ENCODE measurements at regions of chr19 and their contacts with region 1.

Region 1: GRCh38 chr19:38964738-38965137 is 10.8 kb downstream of the FBXO17 start:
- DNase-seq: no peak
- H3K4me3 Mint-ChIP-seq: no peak overlapping the region
- H3K27ac Mint-ChIP-seq: no peak overlapping the region
- H3K4me1 Mint-ChIP-seq: peaks cover 11% of the 10 kb centered on the region
- H3K27me3 Mint-ChIP-seq: no peaks in the 10 kb centered on the region
- CTCF ChIP-seq: no peak

Region 2: DNA sequence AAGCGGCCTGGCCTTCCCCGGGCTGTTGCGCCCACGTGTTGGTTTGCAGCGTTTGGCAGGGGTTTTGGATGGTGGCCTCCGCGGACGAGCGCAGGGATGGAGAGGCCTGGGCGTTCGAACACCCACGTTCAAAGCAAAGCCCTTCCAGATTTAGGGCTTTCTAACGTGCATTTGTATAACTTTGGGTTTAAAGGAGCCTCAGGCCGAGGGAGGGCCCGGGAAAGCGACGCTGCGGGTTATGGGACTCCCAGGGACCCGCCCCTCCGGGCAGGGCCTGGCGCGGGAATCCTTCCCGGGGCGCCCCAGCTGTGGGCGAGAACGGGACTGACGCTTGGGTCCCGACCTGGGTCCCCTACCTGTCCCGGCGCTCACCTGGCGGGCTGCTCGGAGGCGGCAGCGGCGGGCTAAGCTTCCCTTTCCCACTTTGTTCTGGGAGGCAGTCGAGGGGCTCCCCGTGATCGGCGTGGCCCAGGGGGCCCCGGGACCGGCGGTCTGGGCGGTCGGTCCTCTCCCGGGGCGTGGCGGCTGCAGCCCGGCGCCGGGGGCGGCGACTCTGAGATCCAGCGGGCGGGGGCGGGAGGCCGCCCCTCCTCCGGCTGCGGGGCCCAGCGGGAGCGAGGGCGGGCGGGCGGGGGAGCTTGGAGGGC is 10.6 kb after region 1 on chr19 and contains the start of gene FBXO17:
- CTCF ChIA-PET with region 1: interaction called, 10 read pairs
- intact Hi-C with region 1: no loop called
- DNase-seq: peak; percentile 71
- H3K4me3 Mint-ChIP-seq: peak within 1 kb of the TSS; percentile 76
- H3K27ac Mint-ChIP-seq: peak within 1 kb of the TSS; percentile 88
- H3K4me1 Mint-ChIP-seq: peaks cover 41% of the 10 kb centered on the region
- H3K27me3 Mint-ChIP-seq: no peaks in the 10 kb centered on the region
- CTCF ChIP-seq: no peak
- total RNA-seq, gene FBXO17: 20.1 and 24.2 TPM in 2 replicates

Region 3: DNA sequence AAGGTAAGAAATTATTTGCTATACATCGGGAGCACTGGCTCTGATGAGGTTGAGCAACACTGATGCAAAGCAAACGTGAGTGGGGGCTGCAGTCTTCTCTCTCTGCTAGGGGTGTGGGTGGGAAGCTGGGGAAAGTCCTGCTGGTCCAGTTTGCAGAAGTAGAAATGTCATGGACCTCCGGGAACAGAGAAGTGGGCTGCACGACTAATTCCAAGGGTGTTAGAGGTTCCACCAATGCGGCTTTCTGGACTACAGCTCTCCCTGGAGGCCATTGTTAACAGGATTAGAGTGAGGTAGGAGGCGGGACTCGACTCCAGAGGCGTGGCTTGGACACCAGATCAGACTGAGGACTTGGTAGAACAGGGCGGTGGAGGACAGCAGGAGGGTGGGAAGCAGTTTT is 73.4 kb after region 1 on chr19:
- CTCF ChIA-PET with region 1: interaction called, 16 read pairs
- intact Hi-C with region 1: loop called (anchors 1 kb)
- DNase-seq: peak; percentile 69
- H3K4me3 Mint-ChIP-seq: no peak overlapping the region
- H3K27ac Mint-ChIP-seq: no peak overlapping the region
- H3K4me1 Mint-ChIP-seq: peaks cover 14% of the 10 kb centered on the region
- H3K27me3 Mint-ChIP-seq: no peaks in the 10 kb centered on the region
- CTCF ChIP-seq: no peak